MCF 10A (cell line): ENCODE measurements at regions of chr18 and their contacts with region 1.

Region 1: DNA sequence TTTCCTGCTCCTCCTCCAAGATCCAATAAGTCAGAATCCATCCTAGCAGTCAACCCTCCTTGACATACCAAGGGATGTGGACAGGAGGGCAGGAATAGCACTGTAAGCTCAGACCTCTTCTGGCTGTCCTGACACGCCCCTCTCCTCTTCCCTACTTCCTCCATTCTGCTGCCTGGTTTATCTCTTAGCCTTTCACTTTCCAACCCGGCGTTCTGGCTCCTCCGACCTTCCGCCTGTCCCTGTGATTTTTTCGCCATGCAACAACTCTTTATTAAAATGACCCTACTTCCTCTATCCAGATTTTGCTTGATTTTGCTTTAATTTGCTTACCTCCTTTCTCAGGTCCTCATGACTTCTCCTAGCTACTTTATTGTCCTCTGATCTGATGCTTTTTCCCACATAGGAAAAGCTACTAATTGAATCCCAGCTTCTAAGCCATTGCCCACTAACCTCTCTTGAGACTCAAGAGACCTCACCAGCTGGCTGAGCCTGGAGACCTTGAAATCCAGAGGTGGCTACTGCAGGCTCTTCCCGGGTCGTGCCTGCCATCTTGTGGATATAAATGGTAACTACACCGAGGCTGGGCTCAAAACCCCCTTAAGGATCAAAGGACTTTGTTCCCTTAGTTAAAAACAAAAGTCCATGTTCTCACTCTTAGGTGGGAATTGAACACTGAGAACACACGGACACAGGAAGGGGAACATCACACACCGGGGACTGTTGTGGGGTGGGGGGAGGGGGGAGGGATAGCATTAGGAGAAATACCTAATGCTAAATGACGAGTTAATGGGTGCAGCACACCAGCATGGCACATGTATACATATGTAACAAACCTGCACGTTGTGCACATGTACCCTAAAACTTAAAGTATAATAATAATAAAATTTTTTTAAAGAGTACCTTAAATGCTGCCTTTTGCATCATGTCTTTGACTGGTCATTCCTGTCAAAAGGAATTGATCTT is 139.4 kb downstream of the AKAIN1 start:
- DNase-seq: peak; percentile 0
- H3K4me3 Mint-ChIP-seq: no peak overlapping the region
- H3K27ac Mint-ChIP-seq: no peak overlapping the region
- H3K4me1 Mint-ChIP-seq: peaks cover 5% of the 10 kb centered on the region
- H3K27me3 Mint-ChIP-seq: no peaks in the 10 kb centered on the region
- CTCF ChIP-seq: peak; percentile 87

Region 2: GRCh38 chr18:4106407-4107033 is 951.1 kb before region 1 on chr18:
- CTCF ChIA-PET with region 1: interaction called, 130 read pairs
- POLR2A ChIA-PET with region 1: interaction called, 4 read pairs
- intact Hi-C with region 1: loop called (anchors 1 kb)
- DNase-seq: peak; percentile 38
- H3K4me3 Mint-ChIP-seq: no peak overlapping the region
- H3K27ac Mint-ChIP-seq: no peak overlapping the region
- H3K4me1 Mint-ChIP-seq: no peaks in the 10 kb centered on the region
- H3K27me3 Mint-ChIP-seq: peaks cover 9% of the 10 kb centered on the region
- CTCF ChIP-seq: peak; percentile 76

Region 3: DNA sequence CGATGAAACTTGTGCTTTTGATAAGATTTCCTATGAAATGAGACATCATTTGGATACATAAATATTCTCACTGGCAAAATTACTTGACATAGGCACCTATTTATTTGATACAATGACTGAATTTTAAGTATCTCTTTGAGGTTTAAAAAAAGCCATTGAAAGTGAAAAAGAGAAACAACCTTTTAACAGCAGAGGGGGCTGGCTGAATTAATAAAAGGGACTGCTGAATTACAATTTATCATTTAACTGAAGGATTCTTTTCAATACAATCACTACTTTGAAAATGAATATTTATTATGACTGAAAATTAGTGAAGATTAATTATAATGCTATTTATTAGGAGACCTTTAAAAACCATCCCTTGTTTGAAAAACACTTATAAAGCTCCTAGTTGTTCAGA is 937.9 kb before region 1 on chr18:
- CTCF ChIA-PET with region 1: interaction called, 5 read pairs
- POLR2A ChIA-PET with region 1: no interaction called
- intact Hi-C with region 1: loop called (anchors 5 kb)
- DNase-seq: no peak
- H3K4me3 Mint-ChIP-seq: no peak overlapping the region
- H3K27ac Mint-ChIP-seq: no peak overlapping the region
- H3K4me1 Mint-ChIP-seq: peaks cover 1% of the 10 kb centered on the region
- H3K27me3 Mint-ChIP-seq: peaks cover 15% of the 10 kb centered on the region
- CTCF ChIP-seq: no peak

Region 4: GRCh38 chr18:4181882-4182568 is 875.6 kb before region 1 on chr18:
- CTCF ChIA-PET with region 1: interaction called, 21 read pairs
- POLR2A ChIA-PET with region 1: no interaction called
- intact Hi-C with region 1: loop called (anchors 2 kb)
- DNase-seq: no peak
- H3K4me3 Mint-ChIP-seq: no peak overlapping the region
- H3K27ac Mint-ChIP-seq: no peak overlapping the region
- H3K4me1 Mint-ChIP-seq: no peaks in the 10 kb centered on the region
- H3K27me3 Mint-ChIP-seq: peaks cover 29% of the 10 kb centered on the region
- CTCF ChIP-seq: peak; percentile 39

Region 5: GRCh38 chr18:4921548-4921947 is 136.1 kb before region 1 on chr18:
- CTCF ChIA-PET with region 1: no interaction called
- POLR2A ChIA-PET with region 1: no interaction called
- intact Hi-C with region 1: no loop called
- DNase-seq: no peak
- H3K4me3 Mint-ChIP-seq: no peak overlapping the region
- H3K27ac Mint-ChIP-seq: no peak overlapping the region
- H3K4me1 Mint-ChIP-seq: no peaks in the 10 kb centered on the region
- H3K27me3 Mint-ChIP-seq: no peaks in the 10 kb centered on the region
- CTCF ChIP-seq: no peak

Region 6: DNA sequence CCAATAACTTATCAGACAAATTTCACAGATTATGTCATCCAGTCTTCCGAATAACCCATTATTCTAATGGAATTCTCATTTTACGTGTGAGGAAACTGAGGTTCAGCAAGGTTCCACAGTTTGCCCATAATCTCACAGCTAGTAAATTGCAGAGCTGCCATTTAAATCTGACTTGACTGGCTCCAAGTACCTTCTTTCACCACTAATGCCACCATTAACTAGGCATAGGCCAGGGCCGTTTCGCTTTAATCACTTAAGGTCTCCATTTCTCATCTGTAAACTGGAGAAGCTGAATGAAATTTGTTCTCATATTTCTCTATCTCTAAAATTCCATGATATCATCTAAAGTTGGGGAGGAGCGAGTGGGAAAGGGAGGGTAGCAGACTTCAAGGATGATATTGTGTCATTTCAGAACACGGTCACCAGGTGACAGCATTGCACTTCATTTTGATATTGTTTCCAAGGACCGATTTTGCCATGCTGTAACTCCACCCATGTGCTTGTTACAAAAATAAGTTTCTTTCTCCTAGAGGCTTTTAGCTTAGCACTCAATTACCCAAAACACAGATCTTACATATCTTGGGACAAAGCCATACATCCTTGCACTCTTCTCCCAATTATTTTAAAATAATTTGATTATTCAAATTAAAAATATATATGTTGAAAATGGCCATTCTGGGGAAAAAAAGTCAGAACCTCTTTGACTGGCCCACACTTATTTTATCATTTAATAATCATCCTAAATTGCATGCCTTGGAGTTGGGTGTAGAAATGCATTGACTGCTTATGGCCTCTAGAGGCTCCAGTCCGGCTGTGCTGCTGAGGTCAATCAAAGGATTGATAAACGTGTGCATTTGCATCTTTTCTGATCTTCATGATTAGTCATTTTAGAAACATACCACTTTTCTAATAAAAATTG is 15.6 kb after region 1 on chr18:
- CTCF ChIA-PET with region 1: interaction called, 11 read pairs
- POLR2A ChIA-PET with region 1: no interaction called
- intact Hi-C with region 1: no loop called
- DNase-seq: no peak
- H3K4me3 Mint-ChIP-seq: no peak overlapping the region
- H3K27ac Mint-ChIP-seq: no peak overlapping the region
- H3K4me1 Mint-ChIP-seq: no peaks in the 10 kb centered on the region
- H3K27me3 Mint-ChIP-seq: no peaks in the 10 kb centered on the region
- CTCF ChIP-seq: peak; percentile 63

Region 7: DNA sequence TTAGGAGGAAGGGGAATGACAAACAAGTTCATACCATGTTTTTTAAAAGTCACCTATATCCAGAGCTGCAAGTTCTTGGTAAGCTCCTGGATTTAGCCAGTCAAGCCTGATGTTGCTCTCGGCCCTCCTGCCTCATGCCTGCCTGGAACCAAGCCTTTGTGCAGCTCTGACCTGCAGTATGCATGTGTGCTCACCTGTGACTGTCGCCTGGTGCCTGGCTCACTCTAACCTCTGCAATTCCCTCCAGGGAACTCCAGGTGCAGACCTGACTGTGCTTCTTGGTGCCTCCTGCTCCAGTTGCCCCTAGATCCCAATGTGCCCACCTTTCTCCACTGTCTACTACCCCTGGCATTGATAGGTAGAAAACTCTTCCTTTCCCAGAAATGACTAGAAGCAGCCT is 322.9 kb after region 1 on chr18:
- CTCF ChIA-PET with region 1: no interaction called
- POLR2A ChIA-PET with region 1: no interaction called
- intact Hi-C with region 1: no loop called
- DNase-seq: no peak
- H3K4me3 Mint-ChIP-seq: no peak overlapping the region
- H3K27ac Mint-ChIP-seq: no peak overlapping the region
- H3K4me1 Mint-ChIP-seq: no peaks in the 10 kb centered on the region
- H3K27me3 Mint-ChIP-seq: peaks cover 37% of the 10 kb centered on the region
- CTCF ChIP-seq: no peak